Lower leg skin (tissue), 4 donors: ENCODE measurements at regions of chr9 and their contacts with region 1.

Region 1: DNA sequence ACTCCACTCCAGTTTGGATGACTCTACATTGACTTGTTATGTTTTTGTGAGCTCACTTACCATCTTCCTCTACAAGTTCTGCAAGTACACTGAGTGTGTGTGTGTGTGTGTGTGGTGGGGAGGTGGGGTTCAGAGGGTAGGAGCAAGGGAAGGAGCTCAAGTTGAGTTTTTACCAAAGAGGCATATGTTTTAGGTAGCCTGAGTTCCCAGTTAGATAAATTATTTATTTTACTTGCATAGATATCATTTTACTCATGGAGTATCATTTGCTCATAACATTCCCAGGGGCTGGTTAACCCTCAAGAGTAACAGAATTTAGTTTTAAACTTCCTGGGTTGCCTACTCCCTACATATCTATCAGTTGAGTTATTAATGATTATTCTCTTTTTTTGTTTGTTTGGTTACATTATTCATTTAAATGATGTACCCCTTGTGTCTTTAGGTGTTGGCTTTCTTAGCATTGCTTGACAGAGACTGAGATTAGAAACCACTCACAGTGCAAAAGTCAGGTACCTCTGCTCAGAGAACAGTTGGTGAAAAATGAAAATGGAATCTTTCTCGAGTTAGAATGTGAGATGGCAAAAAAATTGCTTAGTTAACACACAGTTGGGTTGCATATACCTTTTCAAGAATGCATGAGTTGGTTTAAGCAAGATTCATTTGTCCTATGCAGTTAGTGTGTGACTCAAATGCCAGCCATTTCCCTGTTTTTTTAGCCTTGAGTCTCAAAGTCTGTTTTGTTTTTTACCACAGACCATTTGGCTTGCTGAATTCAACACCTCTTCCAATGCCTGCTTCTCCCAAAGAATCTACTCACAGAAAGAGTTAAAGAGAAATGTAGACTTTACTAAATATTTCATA is 29.2 kb downstream of the TNFSF8 start:
- DNase-seq: no peak
- H3K4me3 ChIP-seq: no peak overlapping the region
- CTCF ChIP-seq: no peak
- POLR2A ChIP-seq: no peak

Region 2: GRCh38 chr9:114889802-114890251 is 11.3 kb before region 1 on chr9:
- intact Hi-C with region 1: loop called (anchors 1 kb)
- DNase-seq: peak in 1 of 2 donors; percentile 46
- H3K4me3 ChIP-seq: no peak overlapping the region
- CTCF ChIP-seq: no peak
- POLR2A ChIP-seq: no peak